Activated CD4-positive, alpha-beta T cell treated with anti-CD3 and anti-CD28 coated beads for 36 hours (primary cell): ENCODE measurements at regions of chr4 and their contacts with region 1.

Region 1: GRCh38 chr4:26076000-26076587 is 162.1 kb downstream of the SMIM20 start:
- DNase-seq: peak; percentile 78
- ATAC-seq: peak; percentile 53
- H3K4me3 Mint-ChIP-seq: peak overlapping the region; percentile 26
- H3K27ac Mint-ChIP-seq: peak overlapping the region; percentile 90
- H3K4me1 Mint-ChIP-seq: peaks cover 73% of the 10 kb centered on the region
- H3K27me3 Mint-ChIP-seq: peaks cover 6% of the 10 kb centered on the region

Region 2: GRCh38 chr4:25862411-25863346 is 213.4 kb before region 1 on chr4 and contains the start of gene SEL1L3:
- CTCF ChIA-PET with region 1: no interaction called
- POLR2A ChIA-PET with region 1: no interaction called
- intact Hi-C with region 1: loop called in 1 of 2 experiments (anchors 5 kb)
- DNase-seq: peak; percentile 79
- ATAC-seq: peak; percentile 33
- H3K4me3 Mint-ChIP-seq: peak within 1 kb of the TSS; percentile 94
- H3K27ac Mint-ChIP-seq: peak within 1 kb of the TSS; percentile 96
- H3K4me1 Mint-ChIP-seq: peaks cover 40% of the 10 kb centered on the region
- H3K27me3 Mint-ChIP-seq: no peaks in the 10 kb centered on the region
- total RNA-seq, gene SEL1L3: 31.9 to 34.8 TPM

Region 3: GRCh38 chr4:26061248-26061986 is 14.7 kb before region 1 on chr4:
- CTCF ChIA-PET with region 1: no interaction called
- POLR2A ChIA-PET with region 1: interaction called, 3 read pairs
- intact Hi-C with region 1: loop called in 1 of 2 experiments (anchors 1 kb)
- DNase-seq: peak; percentile 53
- ATAC-seq: peak; percentile 52
- H3K4me3 Mint-ChIP-seq: no peak overlapping the region
- H3K27ac Mint-ChIP-seq: no peak overlapping the region
- H3K4me1 Mint-ChIP-seq: peaks cover 19% of the 10 kb centered on the region
- H3K27me3 Mint-ChIP-seq: peaks cover 13% of the 10 kb centered on the region

Region 4: GRCh38 chr4:26150948-26151347 is 74.9 kb after region 1 on chr4:
- CTCF ChIA-PET with region 1: no interaction called
- POLR2A ChIA-PET with region 1: interaction called, 7 read pairs
- intact Hi-C with region 1: loop called (anchors 1 to 2 kb)
- DNase-seq: peak; percentile 70
- ATAC-seq: peak; percentile 89
- H3K4me3 Mint-ChIP-seq: no peak overlapping the region
- H3K27ac Mint-ChIP-seq: peak overlapping the region; percentile 82
- H3K4me1 Mint-ChIP-seq: peaks cover 27% of the 10 kb centered on the region
- H3K27me3 Mint-ChIP-seq: peaks cover 7% of the 10 kb centered on the region

Region 5: GRCh38 chr4:26319467-26319948 is 243.4 kb after region 1 on chr4:
- CTCF ChIA-PET with region 1: interaction called, 20 read pairs
- POLR2A ChIA-PET with region 1: interaction called, 12 read pairs
- intact Hi-C with region 1: loop called (anchors 1 kb)
- DNase-seq: peak; percentile 99
- ATAC-seq: peak; percentile 72
- H3K4me3 Mint-ChIP-seq: peak overlapping the region; percentile 99
- H3K27ac Mint-ChIP-seq: peak overlapping the region; percentile 97
- H3K4me1 Mint-ChIP-seq: peaks cover 37% of the 10 kb centered on the region
- H3K27me3 Mint-ChIP-seq: no peaks in the 10 kb centered on the region

Region 6: DNA sequence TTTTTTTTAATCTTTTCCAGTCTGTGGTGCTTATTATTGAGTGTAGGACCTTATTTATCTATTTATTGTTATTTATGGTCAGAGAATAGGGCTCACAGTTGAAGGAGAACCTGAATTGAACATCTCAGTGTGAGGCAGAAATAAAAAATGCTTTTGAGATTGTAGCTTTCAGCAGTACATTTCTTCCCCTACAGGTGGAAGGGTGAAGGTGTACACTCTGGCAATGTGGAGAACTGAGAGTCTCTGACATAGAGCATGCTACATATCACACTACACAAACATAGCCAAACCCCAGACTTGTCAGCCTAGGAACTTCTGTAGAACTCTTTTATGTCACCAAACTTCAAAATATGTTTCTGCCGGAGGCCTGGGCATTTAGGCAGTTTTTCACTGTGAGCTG is 924.7 kb after region 1 on chr4:
- CTCF ChIA-PET with region 1: no interaction called
- POLR2A ChIA-PET with region 1: interaction called, 3 read pairs
- intact Hi-C with region 1: loop called in 1 of 2 experiments (anchors 5 kb)
- DNase-seq: no peak
- ATAC-seq: peak; percentile 53
- H3K4me3 Mint-ChIP-seq: no peak overlapping the region
- H3K27ac Mint-ChIP-seq: peak overlapping the region; percentile 51
- H3K4me1 Mint-ChIP-seq: peaks cover 61% of the 10 kb centered on the region
- H3K27me3 Mint-ChIP-seq: no peaks in the 10 kb centered on the region